A549 (cell line): ENCODE measurements at regions of chr7 and their contacts with region 1.

Region 1: GRCh38 chr7:47581806-47582763 is at the start of gene TNS3:
- DNase-seq: peak in 1 of 2 experiments; percentile 72
- ATAC-seq: peak; percentile 37 to 67
- H3K4me3 ChIP-seq: peak within 1 kb of the TSS; percentile 83
- H3K27ac ChIP-seq: peak within 1 kb of the TSS; percentile 99 to 100
- H3K4me1 ChIP-seq: peaks cover 63% of the 10 kb centered on the region
- CTCF ChIP-seq: peak; percentile 39
- EP300 ChIP-seq: no peak
- POLR2A ChIP-seq: peak; percentile 21
- RAD21 ChIP-seq: peak; percentile 1 to 48; a peak in 4 of 5 replicates
- polyA plus RNA-seq, gene TNS3: 134 and 137 TPM in 2 replicates

Region 2: GRCh38 chr7:47571331-47572093 is 10.6 kb before region 1 on chr7:
- CTCF ChIA-PET with region 1: interaction called, 10 read pairs
- POLR2A ChIA-PET with region 1: interaction called, 8 read pairs
- DNase-seq: peak in 1 of 2 experiments; percentile 81
- ATAC-seq: peak; percentile 38 to 55
- H3K4me3 ChIP-seq: peak overlapping the region; percentile 10; the same call in 2 of the 3 replicates
- H3K27ac ChIP-seq: peak overlapping the region; percentile 99 to 100
- H3K4me1 ChIP-seq: peaks cover 99% of the 10 kb centered on the region
- CTCF ChIP-seq: no peak
- EP300 ChIP-seq: peak in 1 of 2 experiments; percentile 48; a peak in 1 of 5 replicates
- POLR2A ChIP-seq: no peak
- RAD21 ChIP-seq: 0 out of 5 replicates have a peak, but pooled peaks of 1 of the 2 experiments have one; percentile 12

Region 3: GRCh38 chr7:47600199-47601118 is 18.4 kb after region 1 on chr7:
- CTCF ChIA-PET with region 1: interaction called, 7 read pairs
- POLR2A ChIA-PET with region 1: interaction called, 62 read pairs
- DNase-seq: peak in 1 of 2 experiments; percentile 87
- ATAC-seq: peak; percentile 70 to 71
- H3K4me3 ChIP-seq: peak overlapping the region; percentile 19; the same call in 2 of the 3 replicates
- H3K27ac ChIP-seq: peak overlapping the region; percentile 99
- H3K4me1 ChIP-seq: peaks cover 95% of the 10 kb centered on the region
- CTCF ChIP-seq: no peak
- EP300 ChIP-seq: no peak
- POLR2A ChIP-seq: 0 out of 2 replicates have a peak, but pooled peaks have one; percentile 20
- RAD21 ChIP-seq: peak; percentile 9 to 17; a peak in 3 of 5 replicates

Region 4: DNA sequence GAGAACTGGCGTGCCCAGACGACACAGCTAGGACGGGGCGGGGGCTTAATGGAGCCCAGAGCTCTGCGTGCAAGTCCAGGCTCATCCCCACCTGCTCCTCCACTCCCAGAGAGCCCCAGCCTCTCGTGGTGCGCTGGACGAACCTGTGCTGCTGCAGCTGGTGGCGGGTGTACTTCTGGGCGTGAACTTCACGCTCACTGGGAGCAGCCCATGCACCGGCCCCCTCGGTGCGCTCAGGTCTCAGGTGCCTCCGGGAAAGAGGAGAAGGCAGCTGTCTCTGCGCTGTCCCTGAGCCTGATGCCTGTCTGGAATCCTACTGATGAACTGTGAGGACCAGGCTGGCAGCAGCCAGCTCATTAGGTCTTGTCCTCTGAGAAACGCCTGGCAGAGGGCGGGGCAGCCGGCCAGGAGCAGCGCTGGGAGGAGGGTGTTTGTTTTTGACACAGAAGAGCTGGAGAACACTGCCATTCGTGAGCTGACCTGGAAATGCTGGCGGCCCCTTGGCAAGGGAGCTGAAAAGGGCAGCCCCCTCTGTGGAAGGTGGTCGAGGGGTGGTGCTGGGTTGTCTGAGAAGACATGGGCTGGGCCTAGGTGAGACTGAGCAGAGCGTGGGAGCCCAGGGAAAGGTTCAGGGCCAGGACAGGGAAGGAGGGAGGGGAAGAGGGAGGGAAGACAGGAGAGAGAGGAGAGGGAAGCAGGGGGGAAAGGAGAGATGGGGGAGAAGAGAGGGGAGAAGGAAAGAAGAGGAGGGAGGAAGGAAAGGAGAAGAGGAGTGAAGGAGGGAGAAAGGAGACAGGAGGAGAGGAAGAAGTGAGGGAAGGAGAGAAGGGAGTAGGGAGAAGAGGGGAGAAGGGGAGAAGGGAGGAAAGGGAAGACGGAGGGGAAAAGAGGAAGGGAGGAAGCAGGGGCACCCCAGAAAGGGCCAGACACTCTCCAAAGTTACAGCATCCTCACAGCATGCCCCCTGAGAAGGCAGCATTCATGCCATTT is 53.3 kb after region 1 on chr7:
- CTCF ChIA-PET with region 1: interaction called, 6 read pairs
- POLR2A ChIA-PET with region 1: interaction called, 13 read pairs
- DNase-seq: peak; percentile 73 to 83
- ATAC-seq: peak; percentile 82 to 86
- H3K4me3 ChIP-seq: peak overlapping the region; percentile 40
- H3K27ac ChIP-seq: peak overlapping the region; percentile 89 to 90
- H3K4me1 ChIP-seq: peaks cover 65% of the 10 kb centered on the region
- CTCF ChIP-seq: no peak
- EP300 ChIP-seq: no peak
- POLR2A ChIP-seq: peak; percentile 59
- RAD21 ChIP-seq: no peak; a peak in 1 of 5 replicates

Region 5: DNA sequence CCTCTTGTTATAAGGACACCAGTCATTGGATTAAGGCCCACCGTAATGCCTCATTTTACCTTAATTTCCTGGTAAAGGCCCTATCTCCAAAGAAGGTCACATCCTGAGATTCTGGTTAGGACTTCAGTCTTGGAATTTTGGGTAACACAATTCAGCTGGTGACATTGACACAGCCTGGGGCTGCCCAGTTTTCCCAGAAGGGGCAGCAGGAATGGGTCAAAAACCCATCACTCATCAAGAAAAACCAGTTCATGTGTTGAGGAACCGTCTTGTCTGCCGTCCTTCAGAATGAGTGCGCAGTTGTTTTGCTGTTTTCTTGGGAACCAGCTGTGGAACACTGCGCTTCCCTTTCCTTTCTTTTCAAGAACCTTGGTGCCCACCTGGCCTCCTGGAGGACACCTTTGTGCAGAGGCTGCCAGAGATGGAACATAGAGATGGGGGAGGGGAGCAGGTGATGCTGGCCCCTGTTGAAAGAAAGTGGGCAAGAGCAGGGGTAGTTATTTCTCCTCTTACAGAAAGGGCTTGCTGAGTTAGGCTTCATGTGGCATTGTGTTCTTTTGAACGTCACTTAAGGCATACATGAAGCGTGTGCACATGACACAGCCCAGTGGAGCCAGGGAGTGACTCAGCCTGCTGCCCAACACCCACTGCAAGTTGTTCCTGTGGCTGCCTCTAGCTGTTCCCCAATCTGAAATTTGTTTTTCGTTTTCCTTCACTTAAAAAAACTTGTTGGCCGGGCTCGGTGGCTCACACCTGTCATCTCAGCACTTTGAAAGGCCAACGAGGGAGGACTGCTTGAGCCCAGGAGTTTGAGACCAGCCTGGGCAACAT is 87.2 kb after region 1 on chr7:
- CTCF ChIA-PET with region 1: no interaction called
- POLR2A ChIA-PET with region 1: no interaction called
- DNase-seq: peak in 1 of 2 experiments; percentile 61
- ATAC-seq: peak; percentile 71 to 91
- H3K4me3 ChIP-seq: no peak overlapping the region
- H3K27ac ChIP-seq: peak overlapping the region; percentile 61 to 86
- H3K4me1 ChIP-seq: peaks cover 46% of the 10 kb centered on the region
- CTCF ChIP-seq: no peak
- EP300 ChIP-seq: no peak
- POLR2A ChIP-seq: no peak
- RAD21 ChIP-seq: 0 out of 5 replicates have a peak, but pooled peaks of 1 of the 2 experiments have one; percentile 14